ENCODE measurements at regions of chr1 and their contacts with region 1.

Region 1: DNA sequence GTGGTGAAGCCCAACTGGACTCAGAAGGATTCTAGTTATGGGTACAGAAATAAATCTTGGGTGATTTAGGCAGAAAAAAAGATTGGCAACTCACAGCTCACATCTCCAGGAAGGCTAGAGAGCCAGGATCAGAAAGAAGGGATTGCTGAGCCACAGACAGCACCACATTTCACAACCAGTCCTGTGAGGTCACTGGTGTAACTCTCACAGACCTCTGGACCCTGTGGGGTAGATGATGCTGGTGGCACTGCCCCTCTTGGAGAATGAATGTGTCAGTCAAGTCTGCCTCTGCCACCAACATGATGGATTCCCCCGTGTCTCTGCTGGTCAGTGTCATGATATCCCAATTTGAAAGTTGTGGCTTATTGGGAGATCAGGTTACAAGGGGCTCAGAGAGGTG is 70.9 kb upstream of the HMCN1 start:
- DNase-seq: no peak
- ATAC-seq: no peak
- H3K4me3 ChIP-seq: no peak overlapping the region
- H3K27ac ChIP-seq: no peak overlapping the region
- H3K4me1 ChIP-seq: peaks cover 0 to 13% (median 5%) of the 10 kb centered on the region in 9 donors
- H3K27me3 ChIP-seq: no peaks in the 10 kb centered on the region
- CTCF ChIP-seq: no peak

Region 2: GRCh38 chr1:185317034-185317885 is 346.1 kb before region 1 on chr1 and contains the start of gene IVNS1ABP:
- intact Hi-C with region 1: loop called in 4 of 10 experiments (anchors 5 to 10 kb)
- DNase-seq: peak; percentile 95
- ATAC-seq: peak; percentile 88 to 95 (median 91)
- H3K4me3 ChIP-seq: peak within 1 kb of the TSS; percentile 85 to 99 (median 92)
- H3K27ac ChIP-seq: peak within 1 kb of the TSS; percentile 90 to 99 (median 96)
- H3K4me1 ChIP-seq: peaks cover 3 to 49% (median 44%) of the 10 kb centered on the region in 9 donors
- H3K27me3 ChIP-seq: no peaks in the 10 kb centered on the region
- CTCF ChIP-seq: peak in 5 of 9 donors; percentile 10 to 43 (median 25)
- total RNA-seq, gene IVNS1ABP: 44.7 to 132 (median 66.7) TPM

Region 3: GRCh38 chr1:185453496-185454192 is 209.7 kb before region 1 on chr1:
- intact Hi-C with region 1: no loop called
- DNase-seq: no peak
- ATAC-seq: no peak
- H3K4me3 ChIP-seq: no peak overlapping the region
- H3K27ac ChIP-seq: no peak overlapping the region
- H3K4me1 ChIP-seq: no peaks in the 10 kb centered on the region
- H3K27me3 ChIP-seq: no peaks in the 10 kb centered on the region
- CTCF ChIP-seq: no peak